ENCODE measurements at regions of chr10 and their contacts with region 1.

Region 1: GRCh38 chr10:101011517-101012428 is 12.2 kb downstream of the LZTS2 start:
- DNase-seq: no peak
- H3K4me3 ChIP-seq: no peak overlapping the region
- H3K27ac ChIP-seq: no peak overlapping the region
- H3K4me1 ChIP-seq: no peaks in the 10 kb centered on the region
- H3K27me3 ChIP-seq: no peaks in the 10 kb centered on the region
- CTCF ChIP-seq: no peak

Region 2: GRCh38 chr10:100993986-100994708 is 17.6 kb before region 1 on chr10:
- intact Hi-C with region 1: loop called (anchors 2 kb)
- DNase-seq: no peak
- H3K4me3 ChIP-seq: no peak overlapping the region
- H3K27ac ChIP-seq: no peak overlapping the region
- H3K4me1 ChIP-seq: peaks cover 11% of the 10 kb centered on the region
- H3K27me3 ChIP-seq: no peaks in the 10 kb centered on the region
- CTCF ChIP-seq: peak; percentile 55

Region 3: DNA sequence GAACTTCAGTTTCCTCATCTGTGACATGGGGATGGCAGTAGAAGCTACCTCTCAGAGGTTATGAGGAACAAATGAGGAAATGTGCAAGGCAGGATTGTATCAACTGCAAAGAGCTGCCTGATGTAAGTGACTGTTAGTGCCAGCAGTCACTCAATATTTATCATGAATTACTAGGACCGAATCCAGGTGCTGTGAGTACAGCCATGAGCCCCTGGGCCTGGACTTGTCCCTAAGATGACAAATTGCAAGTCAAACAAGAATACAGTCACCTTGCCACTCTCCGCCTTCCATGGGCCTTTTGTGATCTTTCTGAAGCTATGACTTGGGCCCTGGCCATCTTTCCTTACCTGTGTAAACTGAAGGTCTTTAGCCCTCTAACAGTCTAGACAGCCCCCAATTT is 91.7 kb after region 1 on chr10:
- intact Hi-C with region 1: no loop called
- DNase-seq: no peak
- H3K4me3 ChIP-seq: no peak overlapping the region
- H3K27ac ChIP-seq: no peak overlapping the region
- H3K4me1 ChIP-seq: no peaks in the 10 kb centered on the region
- H3K27me3 ChIP-seq: no peaks in the 10 kb centered on the region
- CTCF ChIP-seq: no peak

Measured in colonic mucosa (tissue), 4 donors.